ENCODE measurements at regions of chr19 and their contacts with region 1.

Region 1: GRCh38 chr19:4352701-4353121 is 9.3 kb downstream of the MPND start:
- DNase-seq: no peak
- ATAC-seq: peak in 7 of 8 donors; percentile 21 to 65 (median 47)
- H3K4me3 ChIP-seq: no peak overlapping the region
- H3K27ac ChIP-seq: no peak overlapping the region
- H3K4me1 ChIP-seq: peaks cover 0 to 8% (median 0%) of the 10 kb centered on the region in 9 donors
- H3K27me3 ChIP-seq: no peaks in the 10 kb centered on the region
- CTCF ChIP-seq: peak; percentile 78 to 94 (median 87)

Region 2: GRCh38 chr19:4260613-4261191 is 92.0 kb before region 1 on chr19:
- intact Hi-C with region 1: loop called in 7 of 10 experiments (anchors 5 kb)
- DNase-seq: no peak
- ATAC-seq: peak in 1 of 8 donors; percentile 20
- H3K4me3 ChIP-seq: no peak overlapping the region
- H3K27ac ChIP-seq: no peak overlapping the region
- H3K4me1 ChIP-seq: no peaks in the 10 kb centered on the region
- H3K27me3 ChIP-seq: no peaks in the 10 kb centered on the region
- CTCF ChIP-seq: no peak

Region 3: GRCh38 chr19:4267101-4267900 is 85.4 kb before region 1 on chr19:
- intact Hi-C with region 1: loop called (anchors 2 to 10 kb)
- DNase-seq: peak; percentile 34 to 53
- ATAC-seq: peak; percentile 57 to 72 (median 66)
- H3K4me3 ChIP-seq: no peak overlapping the region
- H3K27ac ChIP-seq: no peak overlapping the region
- H3K4me1 ChIP-seq: no peaks in the 10 kb centered on the region
- H3K27me3 ChIP-seq: no peaks in the 10 kb centered on the region
- CTCF ChIP-seq: peak; percentile 71 to 90 (median 85)

Region 4: GRCh38 chr19:4278419-4279266 is 74.1 kb before region 1 on chr19 and contains the start of gene SHD:
- intact Hi-C with region 1: loop called in 2 of 10 experiments (anchors 5 to 10 kb)
- DNase-seq: no peak
- ATAC-seq: peak in 2 of 8 donors; percentile 30 to 38
- H3K4me3 ChIP-seq: peak within 1 kb of the TSS in 9 of 10 donors; percentile 22 to 51 (median 44)
- H3K27ac ChIP-seq: no peak within 1 kb of the TSS
- H3K4me1 ChIP-seq: peaks cover 0 to 18% (median 13%) of the 10 kb centered on the region in 9 donors
- H3K27me3 ChIP-seq: peaks cover 19 to 64% (median 54%) of the 10 kb centered on the region in 7 donors
- CTCF ChIP-seq: no peak
- total RNA-seq, gene SHD: 0.17 to 0.37 (median 0.30) TPM in 3 of 10 donors, not detected in the others

Measured in heart right ventricle (tissue), 16 donors.